GM12878 (cell line): ENCODE measurements at regions of chr20 and their contacts with region 1.

Region 1: DNA sequence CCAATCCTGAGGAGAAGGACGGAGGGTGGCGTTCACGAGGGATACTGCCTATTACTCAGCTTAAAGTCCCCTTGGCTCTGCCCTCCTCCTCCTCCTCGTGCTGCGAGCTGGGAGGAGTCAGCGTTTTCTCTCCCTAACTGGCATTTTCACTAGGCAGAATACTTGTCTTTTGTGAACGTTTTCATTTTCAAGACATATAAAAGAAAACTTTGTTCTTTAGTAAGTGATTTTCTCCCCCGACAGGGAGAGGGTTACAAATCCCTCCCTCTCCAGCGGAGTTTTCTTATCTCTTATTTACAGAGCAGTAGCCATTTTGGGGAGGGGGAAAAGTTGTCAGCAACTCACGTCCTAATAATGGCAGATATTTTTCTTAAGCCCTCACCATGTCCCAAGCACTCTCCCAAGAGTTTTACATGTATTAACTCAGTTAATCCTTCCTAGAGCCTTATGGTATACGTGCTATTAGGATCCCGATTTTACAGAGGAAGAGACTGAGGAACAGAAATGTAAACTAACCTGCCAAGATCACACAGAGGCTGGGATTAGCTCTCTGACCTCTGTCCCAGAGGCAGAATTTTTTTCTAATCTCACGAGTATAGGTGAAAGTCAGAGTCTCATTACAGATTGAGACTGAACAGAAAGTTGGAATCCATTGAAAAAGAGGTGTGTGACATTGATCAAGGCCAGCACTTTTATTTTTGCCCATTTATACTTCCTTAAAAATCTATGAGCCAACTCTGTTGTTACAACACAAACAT is 30.0 kb upstream of the ZNF217 start:
- DNase-seq: peak; percentile 60
- ATAC-seq: peak; percentile 81
- H3K4me3 ChIP-seq: peak overlapping the region; percentile 54
- H3K27ac ChIP-seq: peak overlapping the region; percentile 99
- H3K4me1 ChIP-seq: peaks cover 38% of the 10 kb centered on the region
- H3K27me3 ChIP-seq: no peaks in the 10 kb centered on the region
- CTCF ChIP-seq: 0 out of 6 replicates have a peak, but pooled peaks of 1 of the 3 experiments have one; percentile 8
- EP300 ChIP-seq: no peak
- POLR2A ChIP-seq: peak; percentile 61
- RAD21 ChIP-seq: 0 out of 2 replicates have a peak, but pooled peaks have one; percentile 10

Region 2: GRCh38 chr20:53399592-53400259 is 223.9 kb before region 1 on chr20:
- CTCF ChIA-PET with region 1: no interaction called
- POLR2A ChIA-PET with region 1: no interaction called
- RAD21 ChIA-PET with region 1: no interaction called
- SMC1A ChIA-PET with region 1: no interaction called
- in situ Hi-C with region 1: no loop called
- intact Hi-C with region 1: no loop called
- DNase-seq: no peak
- ATAC-seq: no peak; the same call in 2 of the 3 replicates
- H3K4me3 ChIP-seq: no peak overlapping the region
- H3K27ac ChIP-seq: no peak overlapping the region
- H3K4me1 ChIP-seq: no peaks in the 10 kb centered on the region
- H3K27me3 ChIP-seq: no peaks in the 10 kb centered on the region; a peak in 1 of 4 replicates
- CTCF ChIP-seq: no peak
- EP300 ChIP-seq: no peak
- POLR2A ChIP-seq: no peak
- RAD21 ChIP-seq: no peak

Region 3: GRCh38 chr20:53594068-53595017 is 29.3 kb before region 1 on chr20:
- CTCF ChIA-PET with region 1: interaction called, 6 read pairs
- POLR2A ChIA-PET with region 1: interaction called, 21 read pairs
- RAD21 ChIA-PET with region 1: interaction called, 33 read pairs
- SMC1A ChIA-PET with region 1: interaction called, 5 read pairs
- in situ Hi-C with region 1: no loop called
- intact Hi-C with region 1: loop called (anchors 5 kb)
- DNase-seq: no peak
- ATAC-seq: peak; percentile 77
- H3K4me3 ChIP-seq: peak overlapping the region; percentile 81
- H3K27ac ChIP-seq: peak overlapping the region; percentile 84
- H3K4me1 ChIP-seq: peaks cover 8% of the 10 kb centered on the region; the same call in 1 of the 2 replicates
- H3K27me3 ChIP-seq: no peaks in the 10 kb centered on the region
- CTCF ChIP-seq: peak; percentile 7 to 53 (median 40); a peak in 3 of 6 replicates
- EP300 ChIP-seq: no peak
- POLR2A ChIP-seq: peak; percentile 36; the same call in 1 of the 2 replicates
- RAD21 ChIP-seq: peak; percentile 40

Region 4: GRCh38 chr20:53636540-53637097 is 13.0 kb after region 1 on chr20:
- CTCF ChIA-PET with region 1: interaction called, 8 read pairs
- POLR2A ChIA-PET with region 1: interaction called, 29 read pairs
- RAD21 ChIA-PET with region 1: interaction called, 8 read pairs
- SMC1A ChIA-PET with region 1: interaction called, 76 read pairs
- in situ Hi-C with region 1: no loop called
- intact Hi-C with region 1: no loop called
- DNase-seq: no peak
- ATAC-seq: no peak
- H3K4me3 ChIP-seq: no peak overlapping the region
- H3K27ac ChIP-seq: no peak overlapping the region
- H3K4me1 ChIP-seq: peaks cover 5% of the 10 kb centered on the region; the same call in 1 of the 2 replicates
- H3K27me3 ChIP-seq: no peaks in the 10 kb centered on the region
- CTCF ChIP-seq: no peak
- EP300 ChIP-seq: no peak
- POLR2A ChIP-seq: no peak
- RAD21 ChIP-seq: no peak

Region 5: GRCh38 chr20:53652090-53652858 is 28.6 kb after region 1 on chr20:
- CTCF ChIA-PET with region 1: interaction called, 5 read pairs
- POLR2A ChIA-PET with region 1: interaction called, 20 read pairs
- RAD21 ChIA-PET with region 1: interaction called, 18 read pairs
- SMC1A ChIA-PET with region 1: interaction called, 38 read pairs
- in situ Hi-C with region 1: no loop called
- intact Hi-C with region 1: loop called (anchors 2 kb)
- DNase-seq: peak; percentile 93
- ATAC-seq: peak; percentile 76
- H3K4me3 ChIP-seq: peak overlapping the region; percentile 30; the same call in 1 of the 2 replicates
- H3K27ac ChIP-seq: peak overlapping the region; percentile 99
- H3K4me1 ChIP-seq: peaks cover 39% of the 10 kb centered on the region
- H3K27me3 ChIP-seq: no peaks in the 10 kb centered on the region
- CTCF ChIP-seq: no peak
- EP300 ChIP-seq: peak; percentile 68 to 72; a peak in 2 of 4 replicates
- POLR2A ChIP-seq: no peak
- RAD21 ChIP-seq: peak; percentile 17; the same call in 1 of the 2 replicates

Region 6: DNA sequence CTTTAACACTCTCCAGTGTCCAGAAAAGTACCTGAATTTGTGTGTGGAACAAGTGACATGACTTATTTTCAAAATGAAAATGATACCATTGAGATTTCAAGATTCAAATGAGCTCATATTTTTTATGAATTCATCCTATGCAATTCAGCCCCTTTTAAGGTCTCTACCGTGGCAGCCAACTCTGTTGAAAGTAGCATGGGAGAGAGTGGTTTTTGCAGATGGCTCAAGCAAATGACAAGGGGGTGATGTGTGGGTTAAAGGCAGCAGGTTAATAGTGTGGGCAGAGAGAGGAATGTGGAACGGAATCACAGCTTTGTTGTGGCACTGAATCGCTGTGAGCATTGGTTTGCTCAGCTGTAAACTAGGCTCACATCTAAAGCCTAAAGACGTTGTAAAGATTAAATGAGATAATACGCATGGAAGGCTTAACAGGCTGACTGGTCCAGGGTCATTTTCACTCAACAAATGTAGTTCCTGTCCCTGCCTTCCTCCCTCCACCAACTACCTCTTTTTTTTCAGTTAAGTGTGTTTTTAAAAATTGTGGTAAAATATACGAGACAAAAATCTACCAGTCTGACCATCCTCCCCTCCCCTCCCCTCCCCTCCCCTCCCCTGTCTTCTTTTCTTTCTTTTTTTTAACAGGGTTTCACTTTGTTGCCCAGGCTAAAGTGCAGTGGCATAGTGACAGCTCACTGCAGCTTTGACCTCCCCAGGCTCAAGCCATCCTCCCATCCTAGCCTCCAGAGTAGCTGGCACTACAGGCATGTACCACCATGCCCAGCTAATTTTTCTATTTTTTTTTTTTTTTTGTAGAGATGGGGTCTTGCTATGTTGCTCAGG is 84.7 kb after region 1 on chr20:
- CTCF ChIA-PET with region 1: no interaction called
- POLR2A ChIA-PET with region 1: interaction called, 3 read pairs
- RAD21 ChIA-PET with region 1: interaction called, 12 read pairs
- SMC1A ChIA-PET with region 1: interaction called, 14 read pairs
- in situ Hi-C with region 1: no loop called
- intact Hi-C with region 1: no loop called
- DNase-seq: peak; percentile 94
- ATAC-seq: peak; percentile 83
- H3K4me3 ChIP-seq: peak overlapping the region; percentile 43; the same call in 1 of the 2 replicates
- H3K27ac ChIP-seq: peak overlapping the region; percentile 97
- H3K4me1 ChIP-seq: peaks cover 45% of the 10 kb centered on the region
- H3K27me3 ChIP-seq: no peaks in the 10 kb centered on the region
- CTCF ChIP-seq: no peak
- EP300 ChIP-seq: peak in 1 of 2 experiments; percentile 35; a peak in 3 of 4 replicates
- POLR2A ChIP-seq: peak; percentile 36
- RAD21 ChIP-seq: 0 out of 2 replicates have a peak, but pooled peaks have one; percentile 6